ENCODE measurements at regions of chr7 and their contacts with region 1.

Region 1: GRCh38 chr7:44606450-44607254 is at the start of gene OGDH:
- DNase-seq: peak; percentile 100
- ATAC-seq: peak; percentile 97
- H3K4me3 Mint-ChIP-seq: peak within 1 kb of the TSS; percentile 92
- H3K27ac Mint-ChIP-seq: peak within 1 kb of the TSS; percentile 97
- H3K4me1 Mint-ChIP-seq: peaks cover 26% of the 10 kb centered on the region
- H3K27me3 Mint-ChIP-seq: no peaks in the 10 kb centered on the region
- CTCF ChIP-seq: no peak
- total RNA-seq, gene OGDH: 78.6 to 85.6 TPM

Region 2: DNA sequence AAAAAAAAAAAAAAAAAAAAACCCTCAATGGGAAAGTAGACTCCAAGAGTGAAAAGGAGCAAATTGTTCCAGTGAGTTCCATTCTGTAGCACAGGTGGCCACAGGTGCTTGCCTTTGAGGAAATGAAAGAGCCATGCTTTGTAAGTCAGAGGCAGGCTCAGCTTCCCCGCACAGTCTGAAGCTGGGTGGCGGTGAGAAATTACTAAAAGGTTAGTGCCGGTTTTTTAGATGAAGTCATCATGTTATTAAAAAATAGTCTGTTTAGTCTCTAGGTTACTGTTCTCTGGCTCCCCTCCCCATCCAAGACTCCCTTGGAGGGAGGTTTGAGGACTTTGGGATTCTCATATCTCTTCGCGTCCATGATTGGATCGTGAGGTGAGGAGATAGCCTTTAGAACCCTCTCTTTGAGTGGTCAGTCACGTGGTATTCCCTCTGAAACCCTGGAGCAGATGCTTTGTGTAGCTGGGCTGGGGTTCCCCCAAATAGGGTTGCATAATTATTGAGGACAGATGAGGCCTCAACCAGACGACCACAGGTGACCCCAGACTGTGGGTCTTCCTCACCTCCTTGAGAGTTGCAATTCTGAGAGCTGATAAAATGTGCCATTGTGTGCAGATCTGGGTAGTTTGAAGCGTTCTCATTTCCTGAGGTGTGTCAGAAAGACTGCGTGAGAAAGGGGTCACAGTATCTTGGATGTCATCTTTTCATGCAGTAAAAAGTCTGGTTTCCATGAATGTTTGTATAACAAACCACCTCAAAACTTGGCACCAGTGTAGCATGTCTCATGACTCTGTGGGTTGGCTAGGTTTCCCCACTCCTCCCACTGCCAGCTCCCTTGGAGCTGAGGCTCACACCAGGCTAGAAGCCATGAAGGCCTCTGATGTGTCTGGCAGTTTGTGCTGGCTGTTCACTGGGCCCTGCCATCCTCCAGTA is 26.9 kb after region 1 on chr7:
- CTCF ChIA-PET with region 1: interaction called, 13 read pairs
- POLR2A ChIA-PET with region 1: interaction called, 52 read pairs
- intact Hi-C with region 1: no loop called
- DNase-seq: peak; percentile 67
- ATAC-seq: peak; percentile 46
- H3K4me3 Mint-ChIP-seq: peak overlapping the region; percentile 9
- H3K27ac Mint-ChIP-seq: peak overlapping the region; percentile 91
- H3K4me1 Mint-ChIP-seq: peaks cover 83% of the 10 kb centered on the region
- H3K27me3 Mint-ChIP-seq: no peaks in the 10 kb centered on the region
- CTCF ChIP-seq: no peak

Region 3: DNA sequence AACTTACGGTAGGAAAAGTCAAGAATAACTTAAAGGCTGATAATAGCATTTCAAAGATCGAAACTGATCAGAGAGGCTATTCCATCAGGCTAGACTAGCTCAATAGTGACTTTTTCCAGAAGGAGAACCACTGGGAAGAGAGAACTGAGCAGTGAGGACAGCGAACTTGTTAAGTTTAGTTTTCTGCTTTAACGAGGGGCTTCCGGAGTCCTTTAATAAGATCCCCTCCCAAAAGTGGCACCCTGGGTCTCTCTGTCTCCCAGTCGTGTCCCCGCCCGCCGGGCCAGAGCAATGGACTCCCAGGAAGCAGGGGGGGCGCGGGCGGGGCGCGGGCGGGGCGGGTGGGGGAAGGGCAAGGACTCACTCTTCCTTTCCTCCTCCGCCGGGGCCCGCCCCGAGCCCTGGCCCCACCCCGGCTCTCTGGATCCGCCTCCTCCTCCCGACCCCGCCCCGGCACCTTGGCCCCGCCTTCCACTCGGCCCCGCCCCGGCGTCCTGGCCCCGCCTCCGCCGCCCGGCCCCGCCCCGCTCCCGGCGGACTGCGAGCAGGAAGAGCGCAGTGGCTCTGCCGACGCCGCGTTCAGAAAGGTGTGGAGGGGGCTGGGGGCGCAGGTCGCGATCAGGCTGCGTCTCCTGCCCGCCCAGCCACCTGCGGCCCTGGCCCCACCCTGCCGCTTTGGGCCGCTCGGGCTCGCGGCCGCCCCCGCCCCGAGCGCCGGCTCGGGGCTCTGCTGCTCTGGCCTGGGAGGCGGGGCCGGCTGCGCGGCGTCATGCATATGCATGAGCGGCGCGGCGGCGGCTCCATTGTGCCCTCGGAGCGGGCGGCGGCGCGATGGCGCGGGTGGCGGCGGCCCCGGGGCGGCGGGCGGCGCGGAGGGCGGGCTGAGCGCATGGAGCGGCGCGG is 141.6 kb after region 1 on chr7 and contains the start of gene ZMIZ2:
- CTCF ChIA-PET with region 1: no interaction called
- POLR2A ChIA-PET with region 1: interaction called, 14 read pairs
- intact Hi-C with region 1: no loop called
- DNase-seq: peak; percentile 92
- ATAC-seq: peak; percentile 93
- H3K4me3 Mint-ChIP-seq: peak within 1 kb of the TSS; percentile 83
- H3K27ac Mint-ChIP-seq: peak within 1 kb of the TSS; percentile 81
- H3K4me1 Mint-ChIP-seq: peaks cover 33% of the 10 kb centered on the region
- H3K27me3 Mint-ChIP-seq: no peaks in the 10 kb centered on the region
- CTCF ChIP-seq: no peak
- total RNA-seq, gene ZMIZ2: 131 to 134 TPM

Measured in activated CD8-positive, alpha-beta T cell treated with anti-CD3 and anti-CD28 coated beads for 36 hours (primary cell).